ENCODE measurements at regions of chr21 and their contacts with region 1.

Region 1: DNA sequence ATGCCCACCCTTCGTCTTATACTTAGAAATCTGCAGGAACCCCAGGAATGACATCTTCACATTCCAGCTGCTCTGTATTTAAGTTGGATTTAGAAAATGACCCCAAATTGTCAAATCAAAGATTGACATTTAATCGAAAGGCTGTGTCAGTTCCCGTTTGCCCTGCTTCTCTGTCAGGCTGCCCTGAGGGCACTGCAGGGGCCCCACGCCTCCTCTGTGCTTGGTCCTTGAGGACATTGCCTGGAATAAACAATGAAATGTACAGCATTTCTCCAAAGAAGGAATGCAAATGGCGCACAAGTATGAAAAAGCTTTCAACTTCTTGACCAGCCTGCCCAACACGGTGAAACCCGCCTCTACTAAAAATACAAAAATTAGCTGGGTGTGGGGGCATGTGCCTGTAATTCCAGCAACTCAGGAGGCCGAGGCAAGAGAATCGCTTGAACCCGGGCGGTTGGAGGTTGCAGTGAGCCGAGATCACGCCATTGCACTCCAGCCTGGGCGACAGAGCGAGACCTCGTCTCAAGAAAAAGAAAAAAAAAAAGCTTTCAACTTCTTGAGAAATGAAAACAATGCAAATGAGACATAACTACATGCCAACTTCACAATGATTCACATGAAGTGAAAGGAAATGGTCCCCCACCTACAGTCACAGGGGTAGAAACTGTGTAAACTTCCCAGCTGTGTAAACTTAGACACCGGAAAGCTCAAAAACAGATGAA is 3.0 kb downstream of the TMPRSS3 start:
- DNase-seq: no peak
- H3K4me3 ChIP-seq: no peak overlapping the region
- H3K27ac ChIP-seq: no peak overlapping the region
- H3K4me1 ChIP-seq: no peaks in the 10 kb centered on the region
- H3K27me3 ChIP-seq: no peaks in the 10 kb centered on the region
- CTCF ChIP-seq: no peak

Region 2: GRCh38 chr21:41953831-41954653 is 438.8 kb before region 1 on chr21 and contains the start of gene C2CD2:
- CTCF ChIA-PET with region 1: no interaction called
- dilution Hi-C with region 1: no loop called
- in situ Hi-C with region 1: no loop called
- intact Hi-C with region 1: no loop called
- DNase-seq: peak; percentile 50
- H3K4me3 ChIP-seq: peak within 1 kb of the TSS; percentile 63 to 81 (median 76)
- H3K27ac ChIP-seq: peak within 1 kb of the TSS; percentile 51
- H3K4me1 ChIP-seq: peaks cover 46% of the 10 kb centered on the region
- H3K27me3 ChIP-seq: no peaks in the 10 kb centered on the region
- CTCF ChIP-seq: no peak
- total RNA-seq, gene C2CD2: 29.1 to 36.7 TPM

Region 3: GRCh38 chr21:42309753-42310221 is 83.1 kb before region 1 on chr21:
- CTCF ChIA-PET with region 1: no interaction called
- dilution Hi-C with region 1: loop called (anchors 5 kb)
- in situ Hi-C with region 1: no loop called
- intact Hi-C with region 1: no loop called
- DNase-seq: no peak
- H3K4me3 ChIP-seq: no peak overlapping the region
- H3K27ac ChIP-seq: no peak overlapping the region
- H3K4me1 ChIP-seq: no peaks in the 10 kb centered on the region
- H3K27me3 ChIP-seq: no peaks in the 10 kb centered on the region
- CTCF ChIP-seq: peak; percentile 70 to 80

Region 4: DNA sequence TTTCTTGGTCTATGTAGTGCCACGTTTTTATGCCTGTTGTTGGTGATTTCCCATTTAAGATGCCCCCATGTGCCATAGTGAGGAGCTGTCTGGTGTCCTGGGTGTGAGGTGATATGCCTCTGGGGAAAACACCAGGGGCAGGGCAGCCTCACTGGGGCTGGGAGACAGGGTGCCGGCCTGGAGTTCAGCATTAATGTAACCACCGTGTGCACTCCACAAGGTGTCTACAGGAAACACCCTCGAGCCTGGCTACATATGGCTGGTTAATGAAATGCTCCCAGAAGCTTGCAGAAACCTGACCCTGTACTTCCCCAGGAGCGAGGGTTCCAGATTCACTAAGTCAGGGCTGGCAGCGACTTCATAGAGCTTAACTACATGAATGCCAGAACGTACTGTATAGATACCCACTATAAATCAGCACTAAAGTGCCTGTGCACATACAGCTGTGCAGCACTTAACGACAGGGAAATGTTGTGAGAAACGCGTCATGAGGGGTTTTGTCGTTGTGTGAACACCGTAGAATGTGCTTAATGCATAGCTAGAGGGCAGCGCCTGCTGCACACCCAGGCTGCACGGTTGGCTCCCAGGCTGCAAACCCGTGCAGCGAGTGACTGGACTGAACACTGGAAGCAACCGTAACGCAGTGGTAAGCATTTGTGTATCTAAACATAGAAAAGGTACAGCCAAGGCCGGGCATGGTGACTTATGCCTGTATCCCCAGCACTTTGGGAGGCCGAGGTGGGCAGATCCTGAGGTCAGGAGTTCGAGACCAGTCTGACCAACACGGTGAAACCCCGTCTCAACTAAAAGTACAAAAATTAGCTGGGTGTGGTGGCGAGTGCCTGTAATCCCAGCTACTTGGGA is 52.5 kb before region 1 on chr21:
- CTCF ChIA-PET with region 1: no interaction called
- dilution Hi-C with region 1: loop called (anchors 5 kb)
- in situ Hi-C with region 1: no loop called
- intact Hi-C with region 1: no loop called
- DNase-seq: no peak
- H3K4me3 ChIP-seq: no peak overlapping the region
- H3K27ac ChIP-seq: no peak overlapping the region
- H3K4me1 ChIP-seq: no peaks in the 10 kb centered on the region
- H3K27me3 ChIP-seq: no peaks in the 10 kb centered on the region
- CTCF ChIP-seq: no peak

Region 5: DNA sequence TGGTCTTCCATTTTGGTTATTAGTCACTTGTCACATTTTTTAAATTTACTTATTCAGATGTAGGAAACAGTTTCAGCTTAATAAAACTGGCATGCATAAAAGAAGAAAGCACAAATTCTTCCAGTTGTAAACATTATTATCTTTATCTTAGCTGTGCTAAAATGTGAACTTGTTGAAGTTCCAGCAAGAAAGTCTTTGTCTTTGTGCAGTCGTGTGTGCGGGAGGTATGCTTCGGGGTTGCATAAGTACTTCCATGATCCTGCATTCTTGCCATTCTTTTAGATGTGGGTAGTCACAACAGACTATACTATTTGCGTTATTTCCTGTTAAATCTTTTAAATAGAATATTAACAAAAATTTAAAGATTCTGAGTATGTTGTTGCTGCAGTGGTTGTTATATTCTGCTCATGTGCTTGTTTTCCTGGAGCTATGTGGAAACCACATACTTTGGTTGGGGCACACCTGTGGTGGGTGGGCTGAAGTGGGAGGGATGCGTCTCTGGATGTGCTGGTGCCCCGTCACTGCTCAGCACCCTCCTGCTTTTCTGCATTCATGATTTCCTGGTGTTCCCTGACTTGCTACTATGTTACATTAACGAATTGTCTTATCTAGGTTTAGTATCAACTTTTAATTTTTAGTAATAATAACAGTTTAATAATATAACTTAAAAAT is 632.9 kb after region 1 on chr21:
- CTCF ChIA-PET with region 1: no interaction called
- dilution Hi-C with region 1: no loop called
- in situ Hi-C with region 1: no loop called
- intact Hi-C with region 1: no loop called
- DNase-seq: no peak
- H3K4me3 ChIP-seq: no peak overlapping the region
- H3K27ac ChIP-seq: no peak overlapping the region
- H3K4me1 ChIP-seq: no peaks in the 10 kb centered on the region
- H3K27me3 ChIP-seq: no peaks in the 10 kb centered on the region
- CTCF ChIP-seq: no peak